Mammary epithelial cell (primary cell): ENCODE measurements at regions of chr1 and their contacts with region 1.

Region 1: DNA sequence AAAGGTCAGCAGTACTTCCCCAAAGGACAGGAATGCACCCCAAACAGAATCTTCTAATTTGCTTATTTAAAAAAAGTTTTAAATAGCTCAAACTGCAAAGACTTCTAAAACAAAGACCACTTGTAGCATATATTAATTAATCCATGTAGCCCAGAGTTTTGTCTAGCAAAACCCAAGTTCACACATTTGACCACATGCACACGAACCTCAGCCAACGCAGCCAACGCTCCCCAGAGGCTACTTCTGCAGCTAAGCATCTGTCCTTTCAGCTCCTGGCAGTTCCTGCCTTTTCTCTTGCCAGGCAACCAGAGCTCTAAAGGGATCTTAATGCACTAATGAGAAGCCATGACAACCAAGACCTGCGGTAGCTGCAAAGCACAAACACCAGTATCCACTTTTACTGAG is 89.6 kb downstream of the RERE start:
- DNase-seq: no peak
- H3K4me3 ChIP-seq: no peak overlapping the region
- H3K27ac ChIP-seq: no peak overlapping the region
- H3K4me1 ChIP-seq: peaks cover 5% of the 10 kb centered on the region
- H3K27me3 ChIP-seq: no peaks in the 10 kb centered on the region
- CTCF ChIP-seq: no peak

Region 2: GRCh38 chr1:8554956-8555534 is 172.8 kb before region 1 on chr1:
- CTCF ChIA-PET with region 1: interaction called, 10 read pairs
- dilution Hi-C with region 1: no loop called
- in situ Hi-C with region 1: no loop called
- intact Hi-C with region 1: no loop called
- DNase-seq: peak; percentile 69
- H3K4me3 ChIP-seq: no peak overlapping the region
- H3K27ac ChIP-seq: no peak overlapping the region
- H3K4me1 ChIP-seq: peaks cover 9% of the 10 kb centered on the region
- H3K27me3 ChIP-seq: no peaks in the 10 kb centered on the region
- CTCF ChIP-seq: no peak